Activated CD8-positive, alpha-beta T cell treated with anti-CD3 and anti-CD28 coated beads, Interleukin-2, amount 10 ng/mL, durations not matched to agents 7 days and 5 days (primary cell): ENCODE measurements at regions of chr17 and their contacts with region 1.

Region 1: GRCh38 chr17:35534576-35535093 is 2.8 kb downstream of the SLFN12L start:
- DNase-seq: no peak
- ATAC-seq: no peak
- H3K4me3 Mint-ChIP-seq: peak overlapping the region; percentile 82
- H3K27ac Mint-ChIP-seq: peak overlapping the region; percentile 98
- H3K4me1 Mint-ChIP-seq: peaks cover 39% of the 10 kb centered on the region
- H3K27me3 Mint-ChIP-seq: no peaks in the 10 kb centered on the region

Region 2: DNA sequence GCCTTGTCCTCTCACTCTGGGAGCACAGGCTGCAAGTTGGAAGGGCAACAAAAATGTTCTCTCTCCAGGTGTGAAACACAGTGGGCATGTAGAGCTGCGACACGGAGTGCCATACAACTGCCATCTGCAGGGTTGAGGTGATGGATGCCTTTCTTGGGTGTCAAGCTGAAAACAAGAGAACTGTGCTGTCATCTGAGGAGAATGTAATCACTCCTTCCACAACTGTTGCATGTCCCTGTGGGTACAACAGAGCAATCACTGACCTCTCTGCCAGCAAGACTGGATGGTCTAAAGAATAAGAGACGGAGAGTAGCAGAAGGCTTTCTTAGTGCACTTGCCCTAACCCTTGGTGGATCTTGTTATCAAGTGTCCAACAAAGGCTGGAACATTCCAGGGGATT is 190.4 kb before region 1 on chr17:
- CTCF ChIA-PET with region 1: no interaction called
- POLR2A ChIA-PET with region 1: no interaction called
- DNase-seq: no peak
- ATAC-seq: no peak
- H3K4me3 Mint-ChIP-seq: no peak overlapping the region
- H3K27ac Mint-ChIP-seq: no peak overlapping the region
- H3K4me1 Mint-ChIP-seq: peaks cover 67% of the 10 kb centered on the region
- H3K27me3 Mint-ChIP-seq: peaks cover 28% of the 10 kb centered on the region

Region 3: GRCh38 chr17:35486920-35487732 is 47.5 kb before region 1 on chr17:
- CTCF ChIA-PET with region 1: interaction called, 18 read pairs
- POLR2A ChIA-PET with region 1: interaction called, 10 read pairs
- DNase-seq: peak; percentile 76
- ATAC-seq: peak; percentile 69
- H3K4me3 Mint-ChIP-seq: peak overlapping the region; percentile 76
- H3K27ac Mint-ChIP-seq: peak overlapping the region; percentile 90
- H3K4me1 Mint-ChIP-seq: peaks cover 71% of the 10 kb centered on the region
- H3K27me3 Mint-ChIP-seq: no peaks in the 10 kb centered on the region

Region 4: DNA sequence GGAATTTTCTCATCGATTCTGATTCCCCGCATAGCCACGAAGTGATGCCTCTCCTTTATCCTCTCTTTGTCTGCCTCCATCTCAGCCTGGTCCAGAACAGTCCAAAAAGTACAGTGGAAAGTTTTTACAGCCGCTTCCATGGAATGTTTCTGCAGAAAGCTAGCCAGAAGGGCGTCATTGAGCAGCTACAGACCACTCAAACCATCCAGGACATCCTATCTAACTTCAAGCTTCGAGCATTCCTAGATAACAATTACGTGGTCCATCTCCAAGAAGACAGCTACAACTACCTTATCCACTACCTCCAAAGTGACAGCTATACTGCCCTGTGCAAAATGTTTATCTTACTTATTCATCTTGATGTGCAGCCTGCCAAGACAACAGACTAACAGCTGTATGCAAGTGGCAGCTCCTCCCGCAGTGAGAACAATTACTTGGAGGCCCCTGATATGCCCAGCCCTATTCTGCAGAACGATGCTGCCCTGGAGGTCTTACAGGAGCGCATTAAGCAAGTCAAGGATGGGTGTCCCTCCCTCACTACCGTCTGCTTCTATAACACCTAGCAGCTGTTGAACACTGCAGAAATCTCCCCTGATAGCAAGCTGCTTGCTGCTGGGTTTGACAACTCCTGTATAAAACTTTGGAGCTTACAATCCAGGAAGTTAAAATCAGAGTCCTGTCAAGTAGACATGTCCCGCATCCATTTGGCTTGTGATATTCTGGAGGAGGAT is 36.0 kb before region 1 on chr17:
- CTCF ChIA-PET with region 1: interaction called, 11 read pairs
- POLR2A ChIA-PET with region 1: interaction called, 5 read pairs
- DNase-seq: no peak
- ATAC-seq: no peak
- H3K4me3 Mint-ChIP-seq: no peak overlapping the region
- H3K27ac Mint-ChIP-seq: no peak overlapping the region
- H3K4me1 Mint-ChIP-seq: peaks cover 82% of the 10 kb centered on the region
- H3K27me3 Mint-ChIP-seq: no peaks in the 10 kb centered on the region

Region 5: DNA sequence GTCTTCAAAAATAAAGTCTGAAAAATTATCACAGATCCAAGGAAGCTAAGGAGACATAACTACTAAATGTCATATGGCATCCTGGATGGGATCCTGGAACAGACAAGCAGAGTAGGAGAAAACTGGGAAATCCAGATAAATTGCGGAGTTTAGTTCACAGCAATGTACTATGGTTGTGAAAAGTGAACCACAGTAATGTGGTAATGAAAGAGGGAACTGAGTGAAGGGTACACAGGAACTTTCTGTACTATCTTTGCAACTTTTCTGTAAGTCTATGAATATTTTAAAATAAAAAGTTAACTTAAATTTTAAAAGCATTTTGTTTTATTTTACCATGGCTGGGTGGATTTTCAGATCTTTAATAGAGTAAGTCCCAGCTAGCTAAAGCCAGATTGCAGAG is 13.5 kb before region 1 on chr17:
- CTCF ChIA-PET with region 1: interaction called, 31 read pairs
- POLR2A ChIA-PET with region 1: interaction called, 20 read pairs
- DNase-seq: no peak
- ATAC-seq: peak; percentile 27
- H3K4me3 Mint-ChIP-seq: peak overlapping the region; percentile 60
- H3K27ac Mint-ChIP-seq: peak overlapping the region; percentile 73
- H3K4me1 Mint-ChIP-seq: peaks cover 93% of the 10 kb centered on the region
- H3K27me3 Mint-ChIP-seq: no peaks in the 10 kb centered on the region

Region 6: DNA sequence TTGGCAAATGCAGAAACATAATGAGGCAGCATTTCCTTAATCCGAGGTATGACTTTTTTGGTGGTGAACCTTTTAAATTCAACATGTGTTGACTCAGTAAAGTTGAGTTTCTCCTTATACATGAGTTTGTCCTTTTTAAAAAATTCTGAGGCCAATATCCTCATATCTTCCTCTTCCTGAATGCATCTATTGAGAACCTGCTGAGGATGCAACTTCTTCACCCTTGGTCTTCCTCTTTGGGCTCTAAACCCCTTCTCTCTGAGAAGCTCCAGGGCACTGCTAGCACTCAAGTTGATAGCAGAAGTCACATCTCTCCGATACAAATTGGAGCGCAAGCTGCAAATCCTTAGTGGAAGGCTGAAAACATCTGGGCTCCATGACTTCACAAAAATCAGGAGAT is 22.7 kb after region 1 on chr17:
- CTCF ChIA-PET with region 1: no interaction called
- POLR2A ChIA-PET with region 1: interaction called, 10 read pairs
- DNase-seq: no peak
- ATAC-seq: no peak
- H3K4me3 Mint-ChIP-seq: no peak overlapping the region
- H3K27ac Mint-ChIP-seq: no peak overlapping the region
- H3K4me1 Mint-ChIP-seq: no peaks in the 10 kb centered on the region
- H3K27me3 Mint-ChIP-seq: peaks cover 26% of the 10 kb centered on the region

Region 7: GRCh38 chr17:35612924-35613521 is 78.4 kb after region 1 on chr17:
- CTCF ChIA-PET with region 1: no interaction called
- POLR2A ChIA-PET with region 1: no interaction called
- DNase-seq: peak; percentile 58
- ATAC-seq: no peak
- H3K4me3 Mint-ChIP-seq: no peak overlapping the region
- H3K27ac Mint-ChIP-seq: no peak overlapping the region
- H3K4me1 Mint-ChIP-seq: peaks cover 1% of the 10 kb centered on the region
- H3K27me3 Mint-ChIP-seq: no peaks in the 10 kb centered on the region